CD4-positive, alpha-beta memory T cell (primary cell): ENCODE measurements at regions of chr17 and their contacts with region 1.

Region 1: DNA sequence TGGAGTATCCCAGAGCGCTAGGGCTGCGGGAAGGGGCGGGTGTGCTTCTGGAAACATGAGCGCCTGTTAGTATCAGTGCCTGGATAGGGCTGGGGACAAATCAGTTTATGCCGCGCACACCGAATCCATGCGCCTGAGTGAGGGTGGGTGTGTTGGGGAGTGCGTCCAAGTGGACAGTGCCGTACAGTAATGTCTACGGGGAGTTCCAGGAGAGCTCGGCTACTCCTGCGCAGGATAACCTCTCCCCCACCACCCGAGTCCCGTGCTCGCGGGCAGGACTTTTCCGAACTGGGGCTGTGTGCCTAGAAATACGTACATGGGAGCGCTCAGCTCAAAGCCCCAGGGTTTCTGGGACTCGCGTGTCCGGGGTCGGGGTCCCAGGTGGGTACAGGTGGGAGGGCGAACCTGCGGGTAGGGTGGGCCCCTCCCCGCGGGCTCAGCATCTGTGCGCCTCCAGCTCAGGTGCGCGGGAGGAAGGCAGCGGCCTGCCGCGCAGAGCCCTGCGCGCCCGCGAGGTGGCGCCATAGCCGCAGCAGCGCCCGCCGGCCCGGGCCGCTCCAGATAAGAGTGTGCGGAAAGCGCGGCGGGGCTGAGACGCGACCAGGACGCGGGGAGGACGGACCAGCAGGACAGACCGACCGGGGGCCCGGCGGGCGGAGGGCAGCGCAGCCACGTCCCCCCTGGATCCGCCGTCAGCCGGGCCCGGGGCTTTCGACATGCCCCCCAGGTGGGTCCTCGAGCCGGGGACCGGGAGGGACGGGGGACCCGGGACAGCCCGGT is at the start of gene HIC1:
- DNase-seq: peak; percentile 74 to 86 (median 83)
- H3K4me3 ChIP-seq: peak within 1 kb of the TSS; percentile 47 to 63
- H3K4me3 Mint-ChIP-seq: peak within 1 kb of the TSS; percentile 79 to 91 (median 83)
- H3K27ac ChIP-seq: peak within 1 kb of the TSS; percentile 71
- H3K27ac Mint-ChIP-seq: peak within 1 kb of the TSS; percentile 87 to 96 (median 92)
- H3K4me1 ChIP-seq: peaks cover 30% of the 10 kb centered on the region
- H3K4me1 Mint-ChIP-seq: peaks cover 13 to 34% (median 21%) of the 10 kb centered on the region in 4 donors
- H3K27me3 ChIP-seq: no peaks in the 10 kb centered on the region
- H3K27me3 Mint-ChIP-seq: no peaks in the 10 kb centered on the region
- total RNA-seq, gene HIC1: 4.9 to 5.2 TPM

Region 2: GRCh38 chr17:1958134-1958881 is 96.4 kb before region 1 on chr17:
- CTCF ChIA-PET with region 1: no interaction called
- POLR2A ChIA-PET with region 1: no interaction called
- intact Hi-C with region 1: no loop called
- DNase-seq: no peak
- H3K4me3 ChIP-seq: no peak overlapping the region
- H3K4me3 Mint-ChIP-seq: no peak overlapping the region
- H3K27ac ChIP-seq: no peak overlapping the region
- H3K27ac Mint-ChIP-seq: no peak overlapping the region
- H3K4me1 ChIP-seq: no peaks in the 10 kb centered on the region
- H3K4me1 Mint-ChIP-seq: no peaks in the 10 kb centered on the region
- H3K27me3 ChIP-seq: no peaks in the 10 kb centered on the region
- H3K27me3 Mint-ChIP-seq: no peaks in the 10 kb centered on the region

Region 3: DNA sequence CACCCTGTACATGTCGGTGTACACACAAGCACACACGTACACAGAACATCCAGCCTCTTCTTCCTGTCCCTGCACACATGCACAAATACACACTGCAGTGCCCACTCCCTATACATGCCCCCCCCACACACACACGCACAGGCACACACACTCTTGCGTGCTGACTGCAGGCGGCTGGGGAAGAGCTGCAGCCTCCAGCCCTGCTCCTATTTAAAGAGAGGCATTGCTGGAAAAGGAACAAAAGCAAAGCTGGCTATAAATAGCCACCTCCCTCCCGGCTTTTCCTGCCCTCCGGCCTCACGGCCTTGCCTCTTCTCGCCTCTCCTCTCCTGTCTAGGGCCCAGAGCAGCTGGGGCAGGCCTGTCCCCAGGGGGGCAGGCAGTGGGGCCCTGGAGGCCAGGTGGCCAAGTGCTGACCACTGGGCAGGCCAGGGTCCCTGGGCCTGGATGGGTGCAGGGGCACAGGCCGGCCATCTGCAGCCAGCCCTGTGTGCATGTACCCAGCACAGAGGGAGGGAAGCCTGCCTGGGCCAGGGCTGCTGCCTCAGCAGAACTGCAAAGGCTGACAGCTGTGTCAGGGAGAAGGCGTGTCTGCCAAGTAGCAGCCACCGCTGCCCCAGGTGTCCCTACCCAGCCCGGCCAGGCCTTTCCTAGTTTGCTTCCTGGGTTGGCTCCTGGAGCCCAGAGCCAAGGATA is 55.0 kb before region 1 on chr17:
- CTCF ChIA-PET with region 1: no interaction called
- POLR2A ChIA-PET with region 1: no interaction called
- intact Hi-C with region 1: no loop called
- DNase-seq: no peak
- H3K4me3 ChIP-seq: no peak overlapping the region
- H3K4me3 Mint-ChIP-seq: peak overlapping the region in 7 of 8 donors; percentile 25 to 71 (median 61)
- H3K27ac ChIP-seq: no peak overlapping the region
- H3K27ac Mint-ChIP-seq: peak overlapping the region in 1 of 7 donors; percentile 31
- H3K4me1 ChIP-seq: no peaks in the 10 kb centered on the region
- H3K4me1 Mint-ChIP-seq: peaks cover 4 to 11% (median 7%) of the 10 kb centered on the region in 4 donors
- H3K27me3 ChIP-seq: peaks cover 4% of the 10 kb centered on the region
- H3K27me3 Mint-ChIP-seq: peaks cover 16% of the 10 kb centered on the region in 2 donors

Region 4: DNA sequence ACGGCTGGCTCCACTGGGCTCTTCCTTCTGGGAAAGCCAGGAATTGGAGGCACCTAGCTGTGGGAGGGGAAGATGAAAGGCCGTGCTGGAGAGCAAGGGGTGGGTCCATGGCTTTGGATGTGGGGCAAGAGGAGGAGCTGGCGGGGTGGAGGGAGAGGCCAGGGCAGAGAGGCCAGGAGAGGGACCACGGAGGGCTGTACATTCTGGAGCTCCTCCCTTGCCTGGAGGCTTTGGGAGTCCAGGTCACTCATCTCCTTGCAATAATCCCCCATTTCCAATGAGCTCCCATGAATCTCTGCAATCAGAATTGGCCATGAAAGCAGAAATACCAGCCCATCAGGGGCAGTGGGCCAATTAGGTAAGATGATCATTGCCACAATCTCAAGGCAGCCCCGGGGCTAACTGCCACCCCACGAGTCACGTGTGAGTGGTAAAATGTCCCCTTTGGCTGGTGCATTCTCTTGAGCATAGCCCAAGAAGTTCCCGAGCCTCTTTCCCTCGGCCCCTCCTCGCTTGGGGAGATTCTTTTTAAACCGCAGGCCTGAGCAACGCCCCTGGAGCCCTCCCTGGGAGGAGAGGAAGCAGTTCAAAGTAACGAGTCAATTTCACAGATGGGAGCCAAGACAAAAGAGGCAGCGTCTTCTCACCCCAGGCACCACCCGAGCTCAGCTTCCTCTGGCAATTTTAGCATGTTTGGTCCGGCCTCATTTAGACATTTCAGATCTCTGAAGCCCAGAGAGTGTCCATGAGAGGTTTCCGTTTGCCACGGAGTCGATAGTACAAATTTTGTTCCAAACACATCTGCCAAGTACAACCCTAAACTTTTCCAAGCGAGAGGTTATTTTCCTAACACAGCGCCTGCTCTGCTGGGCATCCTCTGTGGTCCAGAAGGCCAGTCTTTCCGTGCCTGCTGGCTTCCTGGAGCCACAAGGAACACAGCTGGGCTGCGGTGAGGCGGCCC is 43.0 kb before region 1 on chr17:
- CTCF ChIA-PET with region 1: no interaction called
- POLR2A ChIA-PET with region 1: no interaction called
- intact Hi-C with region 1: no loop called
- DNase-seq: no peak
- H3K4me3 ChIP-seq: no peak overlapping the region
- H3K4me3 Mint-ChIP-seq: no peak overlapping the region
- H3K27ac ChIP-seq: no peak overlapping the region
- H3K27ac Mint-ChIP-seq: no peak overlapping the region
- H3K4me1 ChIP-seq: no peaks in the 10 kb centered on the region
- H3K4me1 Mint-ChIP-seq: peaks cover 0 to 5% (median under 1%) of the 10 kb centered on the region in 4 donors
- H3K27me3 ChIP-seq: no peaks in the 10 kb centered on the region
- H3K27me3 Mint-ChIP-seq: peaks cover 0 to 4% of the 10 kb centered on the region in 2 donors

Region 5: GRCh38 chr17:2064980-2065785 is 10.5 kb after region 1 on chr17:
- CTCF ChIA-PET with region 1: interaction called, 6 read pairs
- POLR2A ChIA-PET with region 1: interaction called, 11 read pairs
- intact Hi-C with region 1: no loop called
- DNase-seq: peak in 3 of 5 donors; percentile 38 to 61 (median 42)
- H3K4me3 ChIP-seq: no peak overlapping the region
- H3K4me3 Mint-ChIP-seq: no peak overlapping the region
- H3K27ac ChIP-seq: no peak overlapping the region
- H3K27ac Mint-ChIP-seq: peak overlapping the region; percentile 19 to 93 (median 77)
- H3K4me1 ChIP-seq: peaks cover 17% of the 10 kb centered on the region
- H3K4me1 Mint-ChIP-seq: peaks cover 8 to 15% (median 12%) of the 10 kb centered on the region in 4 donors
- H3K27me3 ChIP-seq: no peaks in the 10 kb centered on the region
- H3K27me3 Mint-ChIP-seq: no peaks in the 10 kb centered on the region

Region 6: GRCh38 chr17:2090804-2091534 is 36.3 kb after region 1 on chr17:
- CTCF ChIA-PET with region 1: interaction called, 42 read pairs
- POLR2A ChIA-PET with region 1: interaction called, 26 read pairs
- intact Hi-C with region 1: no loop called
- DNase-seq: no peak
- H3K4me3 ChIP-seq: no peak overlapping the region
- H3K4me3 Mint-ChIP-seq: peak overlapping the region; percentile 90 to 100 (median 94)
- H3K27ac ChIP-seq: peak overlapping the region; percentile 58
- H3K27ac Mint-ChIP-seq: peak overlapping the region in 6 of 7 donors; percentile 62 to 97 (median 95)
- H3K4me1 ChIP-seq: peaks cover 50% of the 10 kb centered on the region
- H3K4me1 Mint-ChIP-seq: peaks cover 38 to 62% (median 51%) of the 10 kb centered on the region in 4 donors
- H3K27me3 ChIP-seq: no peaks in the 10 kb centered on the region
- H3K27me3 Mint-ChIP-seq: no peaks in the 10 kb centered on the region

Region 7: DNA sequence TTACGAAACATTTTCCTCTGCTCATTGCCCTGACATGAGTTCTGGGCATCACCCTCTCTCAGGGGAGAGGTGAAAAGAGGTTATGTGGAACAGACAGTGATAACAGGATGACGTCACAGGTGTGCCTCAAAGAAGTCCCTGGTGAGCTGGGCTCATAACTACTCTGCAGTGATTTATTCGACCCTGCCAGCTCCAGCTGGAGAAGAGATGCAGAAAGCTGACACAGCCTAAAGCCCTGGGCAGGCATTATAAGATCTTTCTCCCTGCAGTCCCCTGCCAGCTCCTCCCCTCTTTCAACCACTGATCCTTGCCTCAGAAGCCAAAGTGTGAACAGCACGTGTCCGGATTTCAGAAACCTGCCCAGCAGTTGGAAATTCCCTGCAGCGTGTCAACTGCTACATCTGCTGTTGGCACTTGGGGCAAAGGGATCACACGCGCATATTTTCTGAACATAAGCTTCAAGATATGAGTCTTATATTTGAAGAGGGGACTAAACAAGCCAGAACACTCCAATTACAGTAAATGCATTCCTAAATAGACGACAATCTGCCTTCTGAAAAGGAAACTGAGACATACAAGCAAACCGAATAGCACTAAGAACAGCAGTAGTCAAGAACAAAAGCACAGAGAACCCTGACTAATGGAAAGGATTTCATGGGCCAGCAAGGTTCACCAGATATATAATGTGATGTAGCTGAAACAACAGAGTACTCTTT is 168.4 kb after region 1 on chr17:
- CTCF ChIA-PET with region 1: interaction called, 13 read pairs
- POLR2A ChIA-PET with region 1: interaction called, 4 read pairs
- intact Hi-C with region 1: no loop called
- DNase-seq: peak; percentile 67 to 89 (median 67)
- H3K4me3 ChIP-seq: no peak overlapping the region
- H3K4me3 Mint-ChIP-seq: peak overlapping the region; percentile 18 to 71 (median 62)
- H3K27ac ChIP-seq: peak overlapping the region; percentile 56
- H3K27ac Mint-ChIP-seq: peak overlapping the region; percentile 79 to 95 (median 90)
- H3K4me1 ChIP-seq: peaks cover 20% of the 10 kb centered on the region
- H3K4me1 Mint-ChIP-seq: peaks cover 28 to 42% (median 32%) of the 10 kb centered on the region in 4 donors
- H3K27me3 ChIP-seq: no peaks in the 10 kb centered on the region
- H3K27me3 Mint-ChIP-seq: no peaks in the 10 kb centered on the region

Region 8: DNA sequence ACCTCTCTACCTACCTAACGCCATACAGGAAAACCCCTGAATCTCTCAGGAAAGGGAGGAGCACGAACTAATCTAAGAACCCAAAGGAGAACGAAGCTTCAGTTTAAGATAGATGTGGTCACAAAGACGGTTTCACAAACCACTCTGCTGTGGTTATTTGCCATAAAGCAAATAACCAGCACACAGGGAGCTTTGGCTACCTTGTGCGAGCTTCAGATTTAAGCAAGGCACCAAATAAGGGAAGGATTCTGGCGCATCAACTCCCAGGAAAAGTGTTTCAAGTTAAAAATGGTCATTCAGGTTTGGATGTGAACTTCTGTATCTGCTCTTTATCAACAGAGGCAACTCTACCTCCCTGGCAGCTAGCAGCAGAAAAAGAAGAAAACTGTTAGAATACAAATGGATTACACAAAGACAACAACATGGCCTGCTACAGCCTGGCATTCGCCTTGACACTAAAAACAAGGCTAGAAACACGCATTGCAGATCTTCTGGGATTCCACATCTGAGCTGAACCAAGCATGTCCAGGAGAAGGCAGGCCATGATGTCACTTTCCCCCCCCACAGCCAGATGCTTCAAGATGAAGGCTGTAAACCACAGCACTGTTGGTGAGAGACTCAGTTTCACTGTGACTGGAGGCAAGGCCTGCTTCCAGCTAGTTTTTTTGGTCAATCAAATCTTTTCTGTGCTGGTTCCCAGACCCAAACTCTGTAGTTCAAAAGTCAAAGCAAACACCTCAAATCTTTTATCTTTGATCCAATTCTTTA is 205.3 kb after region 1 on chr17:
- CTCF ChIA-PET with region 1: interaction called, 49 read pairs
- POLR2A ChIA-PET with region 1: interaction called, 75 read pairs
- intact Hi-C with region 1: no loop called
- DNase-seq: peak; percentile 53 to 82 (median 57)
- H3K4me3 ChIP-seq: peak overlapping the region; percentile 13 to 31
- H3K4me3 Mint-ChIP-seq: peak overlapping the region; percentile 58 to 82 (median 76)
- H3K27ac ChIP-seq: peak overlapping the region; percentile 65
- H3K27ac Mint-ChIP-seq: peak overlapping the region; percentile 85 to 98 (median 96)
- H3K4me1 ChIP-seq: peaks cover 69% of the 10 kb centered on the region
- H3K4me1 Mint-ChIP-seq: peaks cover 43 to 74% (median 61%) of the 10 kb centered on the region in 4 donors
- H3K27me3 ChIP-seq: no peaks in the 10 kb centered on the region
- H3K27me3 Mint-ChIP-seq: no peaks in the 10 kb centered on the region

Region 9: GRCh38 chr17:2282297-2282873 is 227.7 kb after region 1 on chr17:
- CTCF ChIA-PET with region 1: interaction called, 35 read pairs
- POLR2A ChIA-PET with region 1: interaction called, 17 read pairs
- intact Hi-C with region 1: loop called (anchors 1 kb)
- DNase-seq: peak in 4 of 5 donors; percentile 52 to 66 (median 58)
- H3K4me3 ChIP-seq: no peak overlapping the region
- H3K4me3 Mint-ChIP-seq: no peak overlapping the region
- H3K27ac ChIP-seq: no peak overlapping the region
- H3K27ac Mint-ChIP-seq: peak overlapping the region; percentile 8 to 88 (median 84)
- H3K4me1 ChIP-seq: peaks cover 8% of the 10 kb centered on the region
- H3K4me1 Mint-ChIP-seq: peaks cover 1 to 18% (median 15%) of the 10 kb centered on the region in 4 donors
- H3K27me3 ChIP-seq: no peaks in the 10 kb centered on the region
- H3K27me3 Mint-ChIP-seq: no peaks in the 10 kb centered on the region

Region 10: GRCh38 chr17:2336215-2336851 is 281.6 kb after region 1 on chr17 and contains the start of gene TSR1:
- CTCF ChIA-PET with region 1: interaction called, 4 read pairs
- POLR2A ChIA-PET with region 1: interaction called, 5 read pairs
- intact Hi-C with region 1: loop called (anchors 2 kb)
- DNase-seq: peak; percentile 86 to 88 (median 87)
- H3K4me3 ChIP-seq: peak within 1 kb of the TSS; percentile 94 to 97
- H3K4me3 Mint-ChIP-seq: peak within 1 kb of the TSS; percentile 97 to 100 (median 99)
- H3K27ac ChIP-seq: peak within 1 kb of the TSS; percentile 70
- H3K27ac Mint-ChIP-seq: peak within 1 kb of the TSS; percentile 93 to 98 (median 96)
- H3K4me1 ChIP-seq: peaks cover 20% of the 10 kb centered on the region
- H3K4me1 Mint-ChIP-seq: peaks cover 18 to 34% (median 26%) of the 10 kb centered on the region in 4 donors
- H3K27me3 ChIP-seq: no peaks in the 10 kb centered on the region
- H3K27me3 Mint-ChIP-seq: no peaks in the 10 kb centered on the region
- total RNA-seq, gene TSR1: 22.6 to 31.7 TPM

Region 11: DNA sequence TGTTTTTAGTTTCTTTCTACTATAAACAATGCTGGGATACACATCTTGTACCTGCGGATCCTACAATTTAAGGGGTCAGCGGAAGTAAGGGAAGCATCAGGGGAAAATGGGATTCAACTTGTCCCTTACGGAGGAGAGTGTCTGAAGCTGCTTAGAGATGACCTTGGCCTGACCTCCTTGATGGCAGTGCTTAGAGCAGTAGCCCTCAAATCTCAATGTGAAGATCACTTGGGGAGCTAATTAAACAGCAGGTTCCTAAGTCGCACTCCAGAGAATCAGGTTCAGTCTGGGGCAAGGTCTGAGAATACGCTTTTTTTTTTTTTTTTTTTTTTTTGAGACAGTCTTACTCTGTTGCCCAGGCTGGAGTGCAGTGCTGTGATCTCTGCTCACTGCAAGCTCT is 466.6 kb after region 1 on chr17:
- CTCF ChIA-PET with region 1: no interaction called
- POLR2A ChIA-PET with region 1: no interaction called
- intact Hi-C with region 1: no loop called
- DNase-seq: no peak
- H3K4me3 ChIP-seq: no peak overlapping the region
- H3K4me3 Mint-ChIP-seq: no peak overlapping the region
- H3K27ac ChIP-seq: no peak overlapping the region
- H3K27ac Mint-ChIP-seq: no peak overlapping the region
- H3K4me1 ChIP-seq: no peaks in the 10 kb centered on the region
- H3K4me1 Mint-ChIP-seq: no peaks in the 10 kb centered on the region
- H3K27me3 ChIP-seq: no peaks in the 10 kb centered on the region
- H3K27me3 Mint-ChIP-seq: no peaks in the 10 kb centered on the region